Ascending aorta (tissue), 2 donors: ENCODE measurements at regions of chr1 and their contacts with region 1.

Region 1: DNA sequence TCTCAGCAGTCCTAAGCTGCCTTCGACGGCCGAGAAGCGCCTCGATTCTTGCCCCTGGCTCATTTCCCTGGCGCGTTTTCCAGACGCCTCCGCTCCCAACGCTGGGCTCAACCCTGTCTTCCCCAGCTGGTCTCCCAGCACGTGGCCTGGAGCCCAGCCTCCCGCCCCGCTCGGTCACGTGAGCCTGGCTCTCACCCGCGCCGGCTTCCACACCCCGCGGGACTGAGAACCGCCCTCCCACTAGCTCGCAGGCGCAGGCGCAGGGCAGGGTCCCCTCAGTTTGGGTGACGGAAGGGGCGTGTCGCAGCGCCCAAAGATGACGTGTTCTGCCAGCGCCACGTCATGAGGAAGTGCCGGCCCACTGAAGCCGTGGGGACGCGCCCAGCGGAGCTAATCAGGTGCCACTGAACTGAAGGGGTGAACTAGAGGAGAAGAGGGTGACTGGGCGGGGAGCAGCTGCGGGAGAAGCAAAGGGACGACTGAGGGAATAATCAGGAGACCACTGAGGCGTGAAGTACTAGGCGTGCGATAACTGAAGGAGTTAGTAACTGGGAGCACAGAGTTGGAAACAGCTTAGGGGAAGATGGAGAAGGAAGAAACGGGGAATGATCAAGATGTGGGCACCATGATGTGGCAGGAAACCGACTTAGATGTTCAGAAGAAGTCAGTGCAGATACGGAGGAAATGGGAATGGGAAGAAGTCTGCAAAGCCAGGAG is at the start of gene DHDDS:
- DNase-seq: peak; percentile 91 to 98
- H3K4me3 ChIP-seq: peak within 1 kb of the TSS; percentile 44 to 85
- H3K27ac ChIP-seq: peak within 1 kb of the TSS; percentile 10 to 69
- H3K4me1 ChIP-seq: peaks cover 3 to 9% of the 10 kb centered on the region in 2 donors
- H3K27me3 ChIP-seq: no peaks in the 10 kb centered on the region
- CTCF ChIP-seq: no peak
- total RNA-seq, gene DHDDS: 54.2 TPM

Region 2: GRCh38 chr1:26111530-26112406 is 320.4 kb before region 1 on chr1 and contains the start of gene PDIK1L:
- intact Hi-C with region 1: loop called (anchors 1 kb)
- DNase-seq: peak; percentile 61 to 95
- H3K4me3 ChIP-seq: peak within 1 kb of the TSS; percentile 92 to 100
- H3K27ac ChIP-seq: peak within 1 kb of the TSS; percentile 89 to 90
- H3K4me1 ChIP-seq: peaks cover 0 to 16% of the 10 kb centered on the region in 2 donors
- H3K27me3 ChIP-seq: no peaks in the 10 kb centered on the region
- CTCF ChIP-seq: no peak
- total RNA-seq, gene PDIK1L: 4.0 TPM

Region 3: DNA sequence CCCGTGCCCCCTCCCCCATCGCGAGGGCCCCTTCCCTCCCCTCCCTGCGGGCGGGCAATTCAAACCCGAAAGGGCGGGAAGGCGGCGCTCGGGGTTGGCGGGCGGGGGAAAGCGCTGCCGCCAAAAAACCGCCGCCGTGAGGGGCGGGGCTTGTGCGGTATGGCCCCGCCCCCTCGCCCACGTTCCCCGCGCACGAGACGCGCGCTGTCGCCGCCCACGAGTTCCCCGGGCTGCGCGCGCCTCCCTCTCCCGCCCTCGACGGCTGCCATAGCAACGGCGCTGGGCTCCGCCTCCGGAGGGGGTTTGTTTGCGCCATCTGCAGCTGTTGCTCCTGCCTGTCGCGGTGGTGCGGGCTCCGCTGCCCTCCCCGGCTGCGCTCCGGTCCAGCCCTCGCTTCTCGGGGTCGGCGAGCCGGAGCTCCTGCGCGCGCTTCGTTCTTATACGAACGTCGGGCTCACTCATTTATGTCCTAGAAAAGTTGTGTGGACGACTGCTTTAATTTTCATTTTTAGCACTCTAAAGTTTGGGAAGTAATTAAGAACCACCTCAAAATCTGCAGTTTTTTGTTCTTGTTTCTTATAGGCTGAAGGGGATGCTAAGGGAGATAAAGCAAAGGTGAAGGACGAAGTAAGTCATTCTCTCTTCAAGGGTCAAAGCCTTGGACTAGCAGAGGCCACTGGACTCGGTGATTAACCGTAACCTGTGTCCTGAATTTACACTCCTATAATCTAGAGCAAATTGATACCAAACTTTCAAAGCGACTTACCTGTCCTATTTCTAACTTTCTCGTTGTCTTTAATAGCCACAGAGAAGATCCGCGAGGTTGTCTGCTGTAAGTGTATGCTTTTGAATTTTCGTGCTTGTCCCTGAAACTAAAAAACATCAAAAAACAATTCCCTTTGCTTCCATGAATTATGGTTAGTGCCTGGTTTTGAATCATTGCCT is 41.0 kb after region 1 on chr1:
- intact Hi-C with region 1: loop called (anchors 1 kb)
- DNase-seq: peak; percentile 80 to 97
- H3K4me3 ChIP-seq: peak overlapping the region; percentile 72 to 90
- H3K27ac ChIP-seq: peak overlapping the region; percentile 94 to 100
- H3K4me1 ChIP-seq: peaks cover 5 to 22% of the 10 kb centered on the region in 2 donors
- H3K27me3 ChIP-seq: no peaks in the 10 kb centered on the region
- CTCF ChIP-seq: no peak

Region 4: GRCh38 chr1:26538480-26539412 is 106.6 kb after region 1 on chr1:
- intact Hi-C with region 1: no loop called
- DNase-seq: no peak
- H3K4me3 ChIP-seq: no peak overlapping the region
- H3K27ac ChIP-seq: no peak overlapping the region
- H3K4me1 ChIP-seq: no peaks in the 10 kb centered on the region
- H3K27me3 ChIP-seq: no peaks in the 10 kb centered on the region
- CTCF ChIP-seq: no peak